Activated naive CD4-positive, alpha-beta T cell treated with anti-CD3 and anti-CD28 coated beads for 36 hours (primary cell): ENCODE measurements at regions of chr20 and their contacts with region 1.

Region 1: DNA sequence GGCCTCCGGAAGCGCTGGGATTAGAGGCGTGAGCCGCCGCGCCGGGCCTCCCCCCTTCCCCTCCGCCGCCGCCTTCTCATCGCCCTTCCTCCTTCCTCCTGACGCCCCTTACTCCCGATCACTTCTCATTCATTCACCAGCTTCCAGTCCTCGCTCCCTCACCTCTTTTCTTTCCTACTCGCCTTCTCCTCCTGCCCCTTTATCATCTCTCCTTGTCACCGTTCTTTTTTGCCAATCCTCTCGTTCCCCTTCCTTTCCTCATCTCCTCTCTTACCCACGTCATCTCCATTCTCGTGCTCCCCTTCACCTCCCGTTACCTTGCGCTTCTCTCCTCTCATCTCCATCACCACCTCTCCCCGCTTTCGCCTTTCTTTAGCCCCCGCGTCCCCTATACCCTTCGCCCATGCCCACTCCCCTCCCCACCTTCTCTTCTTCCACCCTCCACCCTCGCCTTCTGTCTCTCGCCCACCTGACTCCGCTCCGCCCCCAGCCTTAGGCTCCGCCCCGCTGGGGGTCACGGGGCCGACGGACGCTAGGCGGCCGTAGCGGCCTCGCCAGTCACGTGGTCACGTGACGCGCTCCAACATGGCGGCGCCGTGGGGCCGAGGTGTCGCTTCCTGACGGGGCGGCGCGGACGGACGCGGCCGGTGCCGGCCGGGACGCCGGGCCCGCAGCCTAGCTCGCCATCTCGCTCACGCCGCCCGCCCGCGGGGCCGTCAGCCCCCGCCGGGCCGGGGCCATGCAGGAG is at the start of gene ARFGEF2:
- DNase-seq: peak; percentile 94
- H3K4me3 Mint-ChIP-seq: peak within 1 kb of the TSS; percentile 100
- H3K27ac Mint-ChIP-seq: peak within 1 kb of the TSS; percentile 98
- H3K4me1 Mint-ChIP-seq: peaks cover 46% of the 10 kb centered on the region
- H3K27me3 Mint-ChIP-seq: no peaks in the 10 kb centered on the region
- total RNA-seq, gene ARFGEF2: 18.2 to 18.6 TPM

Region 2: DNA sequence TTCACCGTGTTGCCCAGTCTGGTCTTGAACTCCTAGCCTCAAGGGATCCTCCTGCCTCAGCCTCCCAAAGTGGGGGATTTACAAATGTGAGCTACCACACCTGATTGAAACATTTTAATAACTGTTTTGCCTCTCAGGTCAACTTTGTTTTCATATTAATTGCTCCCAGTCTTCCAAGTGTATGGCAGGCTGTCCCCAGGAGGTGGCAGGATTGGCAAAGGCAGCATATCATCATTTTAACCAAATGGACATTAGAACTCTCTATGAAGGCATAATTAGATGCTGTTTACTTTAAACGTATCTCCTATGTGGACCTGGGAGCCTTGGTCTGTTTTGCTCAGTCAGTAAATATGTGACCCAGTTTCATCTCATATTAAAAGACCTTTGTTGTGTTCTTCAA is 65.6 kb after region 1 on chr20:
- CTCF ChIA-PET with region 1: no interaction called
- intact Hi-C with region 1: no loop called
- DNase-seq: no peak
- H3K4me3 Mint-ChIP-seq: no peak overlapping the region
- H3K27ac Mint-ChIP-seq: no peak overlapping the region
- H3K4me1 Mint-ChIP-seq: no peaks in the 10 kb centered on the region
- H3K27me3 Mint-ChIP-seq: no peaks in the 10 kb centered on the region

Region 3: DNA sequence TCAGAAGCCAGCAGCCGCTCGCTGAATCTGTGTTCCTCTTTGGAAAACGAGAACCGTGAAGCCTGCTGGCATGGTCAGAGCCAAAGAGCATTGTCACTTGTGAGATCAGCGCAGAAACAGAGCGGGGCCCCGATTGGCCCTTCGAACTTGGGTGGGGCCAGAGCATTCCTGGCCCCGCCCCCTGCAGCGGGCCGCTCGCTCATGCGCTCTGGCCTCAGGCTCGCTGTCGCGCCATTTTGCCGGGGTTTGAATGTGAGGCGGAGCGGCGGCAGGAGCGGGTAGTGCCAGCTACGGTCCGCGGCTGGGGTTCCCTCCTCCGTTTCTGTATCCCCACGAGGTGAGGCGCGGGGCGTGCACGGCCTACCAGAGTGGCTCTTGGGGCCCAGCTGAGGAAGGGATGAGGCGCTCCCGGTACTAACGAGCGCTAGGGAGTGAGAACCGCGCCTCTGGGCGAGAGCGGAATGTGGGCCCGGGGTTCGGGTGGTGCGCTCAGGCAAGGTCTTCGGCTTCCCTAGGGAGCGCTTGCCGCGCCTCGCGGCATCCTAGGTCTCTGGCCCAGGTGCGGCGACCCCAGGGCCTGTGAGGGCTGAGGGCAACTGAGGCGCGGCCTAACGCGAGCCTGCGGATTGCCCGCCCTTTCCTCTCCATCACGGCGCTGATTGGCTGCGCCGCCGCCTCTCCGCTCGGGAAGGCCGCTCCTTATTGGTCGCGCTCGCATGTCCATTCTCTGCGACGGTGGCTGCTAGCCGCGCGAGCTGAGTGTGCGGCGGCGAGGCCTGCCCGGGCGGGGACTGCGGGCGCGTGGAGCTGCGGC is 125.0 kb after region 1 on chr20 and contains the start of gene CSE1L:
- CTCF ChIA-PET with region 1: no interaction called
- intact Hi-C with region 1: loop called (anchors 1 kb)
- DNase-seq: peak; percentile 96
- H3K4me3 Mint-ChIP-seq: peak within 1 kb of the TSS; percentile 98
- H3K27ac Mint-ChIP-seq: peak within 1 kb of the TSS; percentile 99
- H3K4me1 Mint-ChIP-seq: peaks cover 38% of the 10 kb centered on the region
- H3K27me3 Mint-ChIP-seq: no peaks in the 10 kb centered on the region
- total RNA-seq, gene CSE1L: 86.1 to 88.9 TPM

Region 4: DNA sequence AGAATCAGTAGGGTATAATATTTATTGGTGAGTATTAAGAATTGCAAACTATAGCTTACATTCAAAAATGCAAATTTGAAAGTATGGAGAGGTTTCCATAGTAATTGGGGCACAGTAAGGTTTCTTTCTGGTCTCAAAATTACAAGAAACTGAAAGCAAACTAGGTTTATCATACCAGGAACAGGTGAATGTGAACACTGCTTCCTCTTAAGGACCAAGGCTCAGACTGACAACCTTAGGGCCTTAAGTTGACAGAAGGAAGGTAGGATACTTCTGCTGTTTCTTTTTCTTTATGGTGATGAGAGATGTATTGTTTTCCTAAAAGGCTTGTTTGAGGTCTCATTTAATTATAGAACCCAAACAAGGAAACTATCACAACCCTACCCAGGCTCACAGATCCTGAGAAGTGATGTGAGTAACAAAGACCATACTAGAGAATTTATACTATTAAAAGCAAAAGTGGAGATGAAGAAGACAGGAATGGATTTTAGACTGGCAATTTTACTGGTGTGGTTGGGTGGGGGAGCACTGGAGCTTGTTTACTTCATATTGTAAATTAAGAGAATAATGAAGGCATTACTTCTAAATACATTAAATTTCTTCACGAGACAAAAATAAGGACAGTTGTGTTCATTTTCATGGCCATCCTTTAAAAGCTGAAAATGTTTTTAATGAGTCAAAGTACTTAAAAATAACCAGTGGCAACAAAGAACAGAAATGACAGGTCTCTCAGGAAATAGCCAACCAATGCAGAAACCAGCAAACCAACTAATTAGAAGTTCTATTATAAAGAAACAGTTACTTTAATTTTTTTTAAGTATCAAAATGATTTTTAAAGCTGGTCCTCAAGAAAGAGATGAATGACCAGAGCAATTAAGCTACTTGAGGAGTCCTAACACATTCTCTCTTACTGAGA is 245.5 kb after region 1 on chr20:
- CTCF ChIA-PET with region 1: no interaction called
- intact Hi-C with region 1: loop called (anchors 10 kb)
- DNase-seq: no peak
- H3K4me3 Mint-ChIP-seq: peak overlapping the region; percentile 48
- H3K27ac Mint-ChIP-seq: peak overlapping the region; percentile 84
- H3K4me1 Mint-ChIP-seq: peaks cover 71% of the 10 kb centered on the region
- H3K27me3 Mint-ChIP-seq: no peaks in the 10 kb centered on the region